Activated CD4-positive, alpha-beta T cell treated with anti-CD3 and anti-CD28 coated beads, Interleukin-2, amount 10 ng/mL, durations not matched to agents 24 days and 14 days (primary cell): ENCODE measurements at regions of chr3 and their contacts with region 1.

Region 1: GRCh38 chr3:72977060-72977808 is 19.4 kb upstream of the PPP4R2 start:
- DNase-seq: no peak
- H3K4me3 Mint-ChIP-seq: no peak overlapping the region
- H3K27ac Mint-ChIP-seq: peak overlapping the region; percentile 85
- H3K4me1 Mint-ChIP-seq: peaks cover 8% of the 10 kb centered on the region
- H3K27me3 Mint-ChIP-seq: peaks cover 8% of the 10 kb centered on the region

Region 2: GRCh38 chr3:72951259-72951722 is 25.9 kb before region 1 on chr3:
- intact Hi-C with region 1: loop called (anchors 1 kb)
- DNase-seq: no peak
- H3K4me3 Mint-ChIP-seq: no peak overlapping the region
- H3K27ac Mint-ChIP-seq: peak overlapping the region; percentile 34
- H3K4me1 Mint-ChIP-seq: peaks cover 14% of the 10 kb centered on the region
- H3K27me3 Mint-ChIP-seq: peaks cover 5% of the 10 kb centered on the region

Region 3: DNA sequence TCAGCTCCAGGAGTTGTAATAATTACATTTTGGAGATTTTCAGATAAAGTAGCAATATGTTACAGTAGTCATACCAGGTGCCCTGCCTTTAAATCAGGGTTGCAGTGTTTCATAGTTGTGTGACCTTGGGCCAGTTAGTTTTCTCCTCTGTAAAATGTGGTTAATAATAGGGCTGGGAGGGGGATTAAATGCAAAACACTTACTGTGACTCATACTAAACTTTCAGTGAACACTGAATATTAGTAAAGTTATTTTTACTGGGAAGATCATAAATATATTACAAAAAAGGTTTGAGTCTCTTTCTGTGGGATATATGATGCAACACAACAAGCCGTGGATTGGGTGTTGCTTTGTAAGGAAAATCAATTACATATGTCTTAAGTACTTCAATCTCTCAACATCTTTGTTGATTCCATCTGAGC is 83.1 kb after region 1 on chr3:
- intact Hi-C with region 1: no loop called
- DNase-seq: no peak
- H3K4me3 Mint-ChIP-seq: no peak overlapping the region
- H3K27ac Mint-ChIP-seq: no peak overlapping the region
- H3K4me1 Mint-ChIP-seq: peaks cover 7% of the 10 kb centered on the region
- H3K27me3 Mint-ChIP-seq: no peaks in the 10 kb centered on the region

Region 4: DNA sequence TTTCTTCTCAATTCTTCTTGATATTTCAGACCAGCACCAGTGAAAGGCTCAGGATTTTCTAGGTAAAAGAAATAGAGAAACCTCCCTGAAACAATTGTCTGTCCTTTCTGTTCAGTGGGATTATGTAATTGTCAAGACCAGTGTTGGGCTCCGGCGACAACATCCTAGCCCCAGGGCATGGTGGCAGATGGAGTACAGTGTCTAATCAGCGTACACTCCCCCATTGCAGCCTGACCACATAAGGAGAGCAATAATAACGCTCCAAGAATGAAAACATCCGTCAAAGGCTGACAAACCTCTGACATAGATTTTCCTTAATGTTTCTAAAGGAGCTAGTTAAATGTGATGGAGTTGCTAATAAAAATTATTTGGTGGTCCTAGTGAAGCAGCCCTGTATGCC is 228.8 kb after region 1 on chr3:
- intact Hi-C with region 1: no loop called
- DNase-seq: no peak
- H3K4me3 Mint-ChIP-seq: no peak overlapping the region
- H3K27ac Mint-ChIP-seq: no peak overlapping the region
- H3K4me1 Mint-ChIP-seq: no peaks in the 10 kb centered on the region
- H3K27me3 Mint-ChIP-seq: no peaks in the 10 kb centered on the region

Region 5: GRCh38 chr3:73341272-73341892 is 364.1 kb after region 1 on chr3:
- intact Hi-C with region 1: no loop called
- DNase-seq: no peak
- H3K4me3 Mint-ChIP-seq: no peak overlapping the region
- H3K27ac Mint-ChIP-seq: no peak overlapping the region
- H3K4me1 Mint-ChIP-seq: no peaks in the 10 kb centered on the region
- H3K27me3 Mint-ChIP-seq: no peaks in the 10 kb centered on the region